ENCODE measurements at regions of chr7 and their contacts with region 1.

Region 1: GRCh38 chr7:67484244-67484751 is 487.7 kb downstream of the TYW1 start:
- DNase-seq: peak; percentile 71 to 74
- H3K4me3 ChIP-seq: no peak overlapping the region
- H3K4me3 Mint-ChIP-seq: peak overlapping the region; percentile 24
- H3K27ac Mint-ChIP-seq: no peak overlapping the region
- H3K4me1 ChIP-seq: no peaks in the 10 kb centered on the region
- H3K4me1 Mint-ChIP-seq: no peaks in the 10 kb centered on the region
- H3K27me3 ChIP-seq: no peaks in the 10 kb centered on the region
- H3K27me3 Mint-ChIP-seq: peaks cover 11% of the 10 kb centered on the region
- CTCF ChIP-seq: peak; percentile 78 to 81

Region 2: DNA sequence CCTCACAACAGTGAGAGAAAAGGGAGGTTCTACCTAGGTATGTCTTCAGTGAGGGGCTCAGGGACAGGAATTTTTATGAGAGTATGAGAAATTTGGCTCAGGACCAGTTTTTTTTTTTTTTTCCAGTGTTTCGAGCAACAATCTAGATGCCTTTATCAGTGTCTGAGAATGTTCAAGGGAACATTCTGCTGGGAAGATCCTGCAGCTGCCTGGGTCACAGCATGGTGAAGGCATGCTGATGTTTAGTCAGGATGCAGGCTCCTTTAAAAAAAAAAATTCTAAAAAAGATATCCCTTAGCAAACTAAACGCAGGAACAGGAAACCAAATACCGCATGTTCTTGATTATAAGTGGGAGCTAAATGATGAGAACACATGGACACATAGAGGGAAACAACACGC is 519.9 kb before region 1 on chr7:
- CTCF ChIA-PET with region 1: no interaction called
- POLR2A ChIA-PET with region 1: no interaction called
- intact Hi-C with region 1: no loop called
- DNase-seq: no peak
- H3K4me3 ChIP-seq: no peak overlapping the region
- H3K4me3 Mint-ChIP-seq: no peak overlapping the region
- H3K27ac Mint-ChIP-seq: no peak overlapping the region
- H3K4me1 ChIP-seq: no peaks in the 10 kb centered on the region
- H3K4me1 Mint-ChIP-seq: peaks cover 6% of the 10 kb centered on the region
- H3K27me3 ChIP-seq: no peaks in the 10 kb centered on the region
- H3K27me3 Mint-ChIP-seq: no peaks in the 10 kb centered on the region
- CTCF ChIP-seq: no peak

Region 3: GRCh38 chr7:67377939-67378862 is 106.1 kb before region 1 on chr7:
- CTCF ChIA-PET with region 1: interaction called, 6 read pairs
- POLR2A ChIA-PET with region 1: no interaction called
- intact Hi-C with region 1: loop called (anchors 5 kb)
- DNase-seq: peak; percentile 77
- H3K4me3 ChIP-seq: no peak overlapping the region
- H3K4me3 Mint-ChIP-seq: no peak overlapping the region
- H3K27ac Mint-ChIP-seq: no peak overlapping the region
- H3K4me1 ChIP-seq: no peaks in the 10 kb centered on the region
- H3K4me1 Mint-ChIP-seq: no peaks in the 10 kb centered on the region
- H3K27me3 ChIP-seq: no peaks in the 10 kb centered on the region
- H3K27me3 Mint-ChIP-seq: no peaks in the 10 kb centered on the region
- CTCF ChIP-seq: peak; percentile 79 to 94

Region 4: DNA sequence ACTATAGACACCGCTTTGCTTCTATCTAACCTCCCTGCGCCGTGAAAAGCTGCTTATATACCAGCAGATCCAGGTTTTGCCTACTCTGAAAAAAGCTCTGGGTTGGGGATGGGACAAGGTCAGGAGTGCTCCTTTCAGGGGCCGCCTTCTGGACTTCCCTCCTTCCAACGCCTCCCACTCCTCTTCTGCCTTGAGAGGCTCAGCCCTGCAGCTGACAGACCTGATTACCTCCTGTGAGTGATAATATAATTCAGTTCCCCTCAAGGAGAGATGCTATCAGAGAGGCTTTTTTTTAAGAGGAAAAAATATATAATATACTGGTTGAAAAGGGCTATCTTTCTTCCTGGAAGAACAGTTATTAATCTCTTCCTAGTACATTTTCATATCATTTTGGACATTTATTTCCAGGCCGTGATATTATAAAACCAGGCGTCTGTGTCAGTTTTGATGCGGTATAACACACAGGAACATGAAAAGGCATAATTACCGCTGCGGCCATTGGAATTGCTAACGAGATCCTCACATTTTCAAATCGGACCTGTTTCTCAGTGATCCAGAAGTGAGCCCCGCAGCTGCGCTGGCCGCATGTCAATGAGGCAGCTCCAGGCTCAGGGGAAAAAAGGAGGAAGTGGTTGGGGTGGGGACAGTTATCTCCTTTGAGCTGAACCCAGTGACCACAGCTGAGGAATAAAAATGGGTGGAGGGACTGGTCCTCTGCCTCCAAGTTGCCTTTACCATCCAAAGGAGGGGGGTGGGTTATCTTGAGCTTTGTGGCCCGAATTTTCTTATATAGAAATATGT is 30.5 kb before region 1 on chr7:
- CTCF ChIA-PET with region 1: no interaction called
- POLR2A ChIA-PET with region 1: no interaction called
- intact Hi-C with region 1: no loop called
- DNase-seq: no peak
- H3K4me3 ChIP-seq: no peak overlapping the region
- H3K4me3 Mint-ChIP-seq: no peak overlapping the region
- H3K27ac Mint-ChIP-seq: no peak overlapping the region
- H3K4me1 ChIP-seq: no peaks in the 10 kb centered on the region
- H3K4me1 Mint-ChIP-seq: no peaks in the 10 kb centered on the region
- H3K27me3 ChIP-seq: no peaks in the 10 kb centered on the region
- H3K27me3 Mint-ChIP-seq: peaks cover 13% of the 10 kb centered on the region
- CTCF ChIP-seq: no peak

Region 5: DNA sequence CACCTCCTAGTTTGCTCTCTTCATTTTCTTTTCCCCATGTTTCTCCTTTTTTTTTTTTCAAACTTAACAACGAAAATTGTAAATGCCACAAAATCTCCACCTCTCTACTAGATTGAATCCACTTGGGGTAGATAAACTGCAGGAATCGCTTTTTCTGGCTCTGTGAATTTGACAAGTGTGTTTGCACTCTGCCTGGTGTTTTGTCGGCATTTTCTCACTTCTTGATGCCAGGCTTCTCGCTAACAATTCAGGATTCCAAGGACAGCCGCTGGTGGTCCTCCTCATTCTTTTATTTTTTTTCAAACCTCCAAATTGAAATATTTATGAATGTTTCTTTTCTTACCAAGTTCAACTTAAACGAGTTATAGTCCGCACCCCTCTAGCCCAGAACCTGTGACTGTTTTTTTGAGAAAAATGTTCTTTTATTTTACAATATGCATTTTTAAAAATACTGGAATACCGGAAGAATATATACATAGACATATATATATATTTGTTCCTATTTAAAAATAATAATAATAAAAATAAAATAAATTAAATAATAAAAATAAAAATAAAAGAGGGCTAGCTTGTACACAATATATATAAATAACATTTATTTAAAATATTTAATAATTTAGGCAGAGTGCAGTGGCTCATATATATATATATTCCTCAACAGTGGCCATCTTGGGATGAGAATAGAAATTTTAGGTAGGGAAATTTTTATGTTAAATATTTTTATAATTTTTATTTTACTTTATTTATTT is 51.1 kb after region 1 on chr7:
- CTCF ChIA-PET with region 1: no interaction called
- POLR2A ChIA-PET with region 1: no interaction called
- intact Hi-C with region 1: no loop called
- DNase-seq: no peak
- H3K4me3 ChIP-seq: no peak overlapping the region
- H3K4me3 Mint-ChIP-seq: no peak overlapping the region
- H3K27ac Mint-ChIP-seq: no peak overlapping the region
- H3K4me1 ChIP-seq: no peaks in the 10 kb centered on the region
- H3K4me1 Mint-ChIP-seq: no peaks in the 10 kb centered on the region
- H3K27me3 ChIP-seq: no peaks in the 10 kb centered on the region
- H3K27me3 Mint-ChIP-seq: peaks cover 2% of the 10 kb centered on the region
- CTCF ChIP-seq: no peak

Region 6: DNA sequence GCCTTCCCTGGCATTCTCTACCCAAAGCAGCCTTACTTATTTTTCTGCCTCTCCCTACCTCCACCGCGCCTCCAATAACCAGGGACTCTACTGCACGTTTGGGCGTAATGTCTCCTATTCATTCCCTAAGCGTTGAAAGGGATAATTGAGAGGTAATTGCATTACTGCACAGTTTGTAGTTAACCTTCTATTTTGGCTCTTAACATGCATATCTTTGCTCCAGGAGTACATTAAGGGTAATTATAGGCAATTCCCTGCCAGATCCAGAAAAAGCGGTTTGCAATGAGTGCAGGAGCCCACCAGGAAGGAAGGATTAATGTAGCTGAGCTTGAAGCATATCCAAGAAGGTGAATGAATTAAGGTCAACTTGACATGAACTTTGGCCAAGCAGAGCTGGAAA is 70.7 kb after region 1 on chr7:
- CTCF ChIA-PET with region 1: no interaction called
- POLR2A ChIA-PET with region 1: no interaction called
- intact Hi-C with region 1: no loop called
- DNase-seq: no peak
- H3K4me3 ChIP-seq: no peak overlapping the region
- H3K4me3 Mint-ChIP-seq: no peak overlapping the region
- H3K27ac Mint-ChIP-seq: no peak overlapping the region
- H3K4me1 ChIP-seq: no peaks in the 10 kb centered on the region
- H3K4me1 Mint-ChIP-seq: no peaks in the 10 kb centered on the region
- H3K27me3 ChIP-seq: no peaks in the 10 kb centered on the region
- H3K27me3 Mint-ChIP-seq: peaks cover 4% of the 10 kb centered on the region
- CTCF ChIP-seq: no peak

Measured in Caco-2 (cell line).